ENCODE measurements at regions of chr10 and their contacts with region 1.

Region 1: DNA sequence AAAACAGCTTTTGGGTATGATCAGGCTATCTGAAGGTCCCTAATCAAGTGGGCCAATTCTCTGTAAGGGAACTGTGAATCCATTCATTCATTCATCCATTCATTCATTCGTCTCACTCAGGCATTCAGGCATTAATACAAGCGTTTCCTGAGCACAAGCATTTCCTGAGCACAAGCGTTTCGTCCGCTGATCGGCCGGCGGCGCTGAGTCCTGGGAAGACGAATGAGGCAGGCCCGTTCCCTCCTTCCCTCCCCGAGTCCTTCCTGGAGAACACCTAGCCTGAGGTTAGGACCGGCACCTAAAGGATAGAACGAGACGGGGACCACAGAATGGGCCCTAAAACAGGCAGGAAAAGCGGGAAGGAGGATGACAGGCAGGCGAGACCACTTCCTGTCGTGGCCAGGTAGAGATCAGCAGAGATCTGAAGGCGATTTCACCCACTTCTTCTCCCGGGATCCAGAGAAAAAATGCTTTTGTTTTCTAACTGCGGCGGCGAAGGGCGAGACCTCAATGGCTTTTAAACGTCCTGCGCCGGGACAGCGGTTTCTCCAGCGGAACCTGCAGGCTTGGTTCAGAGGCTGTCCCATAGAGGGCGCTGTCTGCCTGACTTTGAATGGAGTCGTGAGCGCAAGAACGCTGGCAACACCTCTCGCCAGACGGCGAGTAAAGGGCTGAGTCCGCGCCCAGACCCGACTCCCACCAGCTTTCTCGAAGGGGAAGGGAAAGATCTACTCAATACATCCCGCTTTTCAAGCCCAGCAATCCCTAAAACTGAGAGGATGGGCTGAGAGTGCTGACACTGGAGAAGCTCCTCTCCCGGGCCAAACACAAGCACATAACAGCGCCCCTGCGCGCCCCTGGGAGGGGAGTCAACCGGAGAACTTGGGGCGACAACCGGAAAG is 2.9 kb upstream of the HMX3 start:
- DNase-seq: peak; percentile 93
- ATAC-seq: peak; percentile 64
- H3K4me3 Mint-ChIP-seq: peak overlapping the region; percentile 47
- H3K27ac Mint-ChIP-seq: no peak overlapping the region
- H3K4me1 Mint-ChIP-seq: peaks cover 26% of the 10 kb centered on the region
- H3K27me3 Mint-ChIP-seq: peaks cover 74% of the 10 kb centered on the region
- CTCF ChIP-seq: peak; percentile 91

Region 2: GRCh38 chr10:123069246-123069986 is 63.4 kb before region 1 on chr10:
- CTCF ChIA-PET with region 1: no interaction called
- POLR2A ChIA-PET with region 1: no interaction called
- intact Hi-C with region 1: no loop called
- DNase-seq: no peak
- ATAC-seq: no peak
- H3K4me3 Mint-ChIP-seq: no peak overlapping the region
- H3K27ac Mint-ChIP-seq: no peak overlapping the region
- H3K4me1 Mint-ChIP-seq: no peaks in the 10 kb centered on the region
- H3K27me3 Mint-ChIP-seq: peaks cover 27% of the 10 kb centered on the region
- CTCF ChIP-seq: no peak

Region 3: DNA sequence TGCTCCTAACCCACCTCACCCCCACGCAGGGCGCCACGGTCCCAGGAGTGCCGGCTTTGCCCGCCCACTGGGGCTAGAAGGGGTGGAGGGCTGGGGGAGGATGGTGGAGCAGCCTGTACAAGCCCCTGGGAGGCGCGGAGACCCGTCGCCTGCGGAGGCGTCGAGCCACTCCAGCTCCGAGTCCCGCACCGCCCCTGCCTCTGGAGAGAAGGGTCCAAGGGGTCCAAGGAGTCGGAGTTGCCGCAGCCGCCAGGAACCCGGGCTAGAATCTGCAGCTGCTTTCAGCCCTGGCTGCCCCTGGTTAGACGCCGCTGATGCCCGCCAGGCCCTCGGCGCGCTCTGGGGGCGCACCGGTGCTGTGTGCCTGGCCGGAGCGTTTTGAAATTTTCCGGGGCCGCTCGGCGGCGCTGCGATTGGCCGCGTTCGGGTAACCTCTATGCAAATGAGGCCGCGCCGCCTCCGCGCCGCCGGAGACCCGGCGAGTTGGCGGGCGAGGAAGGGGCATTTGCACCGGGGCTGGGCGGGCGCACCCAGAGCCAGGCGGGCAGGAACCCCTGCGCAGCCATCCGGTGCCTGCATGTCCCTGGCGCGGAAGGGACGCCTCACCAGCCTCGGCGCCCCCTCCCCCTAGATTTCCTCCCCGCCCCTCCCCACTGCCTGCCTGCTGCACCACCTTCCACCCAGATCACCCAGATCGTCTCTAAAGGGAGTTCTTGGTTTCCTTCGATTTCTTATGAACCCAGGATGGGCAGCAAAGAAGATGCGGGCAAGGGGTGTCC is 15.0 kb after region 1 on chr10 and contains the start of gene HMX2:
- CTCF ChIA-PET with region 1: interaction called, 24 read pairs
- POLR2A ChIA-PET with region 1: interaction called, 9 read pairs
- intact Hi-C with region 1: loop called (anchors 2 kb)
- DNase-seq: peak; percentile 74
- ATAC-seq: peak; percentile 48
- H3K4me3 Mint-ChIP-seq: peak within 1 kb of the TSS; percentile 52
- H3K27ac Mint-ChIP-seq: no peak within 1 kb of the TSS
- H3K4me1 Mint-ChIP-seq: peaks cover 65% of the 10 kb centered on the region
- H3K27me3 Mint-ChIP-seq: peaks cover 66% of the 10 kb centered on the region
- CTCF ChIP-seq: no peak
- total RNA-seq, gene HMX2: 0.43 to 0.90 TPM

Region 4: DNA sequence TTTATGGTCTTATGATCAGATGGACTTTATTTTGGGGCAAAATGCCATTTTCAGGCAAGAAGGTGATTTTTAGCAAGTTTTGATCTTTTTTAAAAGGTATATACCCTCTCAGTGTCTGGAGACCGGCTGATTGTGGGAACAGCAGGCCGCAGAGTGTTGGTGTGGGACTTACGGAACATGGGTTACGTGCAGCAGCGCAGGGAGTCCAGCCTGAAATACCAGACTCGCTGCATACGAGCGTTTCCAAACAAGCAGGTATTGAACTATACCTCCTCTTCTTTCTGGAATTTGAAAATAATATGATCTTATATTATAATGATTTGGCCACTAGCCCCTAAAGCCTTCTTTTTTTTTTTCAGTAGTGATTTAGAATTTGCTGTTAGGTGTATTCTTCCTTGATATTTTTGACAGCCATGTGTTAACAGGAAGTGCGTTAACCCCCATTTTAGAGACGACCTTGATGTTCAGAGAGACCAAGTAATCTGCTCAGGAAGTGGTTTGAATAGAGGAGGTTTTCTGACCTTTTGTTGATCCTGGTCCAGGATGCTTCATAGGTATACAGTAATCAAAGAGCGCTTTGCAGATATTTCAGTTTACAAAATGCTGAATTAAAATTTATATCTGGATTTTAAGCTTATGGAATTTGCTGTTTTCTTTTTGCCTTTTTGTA is 27.6 kb after region 1 on chr10:
- CTCF ChIA-PET with region 1: interaction called, 10 read pairs
- POLR2A ChIA-PET with region 1: interaction called, 3 read pairs
- intact Hi-C with region 1: no loop called
- DNase-seq: peak; percentile 57
- ATAC-seq: peak; percentile 91
- H3K4me3 Mint-ChIP-seq: peak overlapping the region; percentile 52
- H3K27ac Mint-ChIP-seq: peak overlapping the region; percentile 89
- H3K4me1 Mint-ChIP-seq: peaks cover 72% of the 10 kb centered on the region
- H3K27me3 Mint-ChIP-seq: no peaks in the 10 kb centered on the region
- CTCF ChIP-seq: no peak

Region 5: DNA sequence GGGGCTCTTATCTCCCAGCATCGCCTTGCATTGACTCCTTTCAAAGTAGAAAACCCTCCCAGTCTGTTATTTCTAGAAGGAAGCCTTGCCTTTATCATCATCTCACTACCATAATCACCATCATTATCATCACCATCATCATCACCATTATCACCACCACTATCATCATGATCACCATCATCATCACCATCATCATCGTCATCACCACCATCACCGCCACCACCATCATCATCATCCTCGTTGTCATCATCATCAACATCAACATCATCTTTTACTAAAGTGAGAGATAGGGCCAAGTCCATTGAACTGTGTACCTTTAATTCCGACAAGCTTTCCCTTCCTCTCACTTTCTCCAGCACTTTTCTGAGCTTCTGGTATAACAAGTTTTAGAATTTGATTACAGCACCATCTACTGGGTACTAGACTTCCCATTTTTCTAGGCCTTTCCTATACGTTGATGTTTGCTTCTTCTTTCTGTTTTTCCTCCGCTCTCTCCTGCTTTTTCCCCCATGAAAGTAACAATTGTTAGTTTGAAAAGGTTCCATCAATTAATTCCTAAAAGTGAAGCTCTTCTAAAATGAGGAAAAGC is 247.8 kb after region 1 on chr10:
- CTCF ChIA-PET with region 1: interaction called, 12 read pairs
- POLR2A ChIA-PET with region 1: no interaction called
- intact Hi-C with region 1: loop called (anchors 5 kb)
- DNase-seq: no peak
- ATAC-seq: no peak
- H3K4me3 Mint-ChIP-seq: no peak overlapping the region
- H3K27ac Mint-ChIP-seq: no peak overlapping the region
- H3K4me1 Mint-ChIP-seq: no peaks in the 10 kb centered on the region
- H3K27me3 Mint-ChIP-seq: peaks cover 11% of the 10 kb centered on the region
- CTCF ChIP-seq: peak; percentile 27

Region 6: DNA sequence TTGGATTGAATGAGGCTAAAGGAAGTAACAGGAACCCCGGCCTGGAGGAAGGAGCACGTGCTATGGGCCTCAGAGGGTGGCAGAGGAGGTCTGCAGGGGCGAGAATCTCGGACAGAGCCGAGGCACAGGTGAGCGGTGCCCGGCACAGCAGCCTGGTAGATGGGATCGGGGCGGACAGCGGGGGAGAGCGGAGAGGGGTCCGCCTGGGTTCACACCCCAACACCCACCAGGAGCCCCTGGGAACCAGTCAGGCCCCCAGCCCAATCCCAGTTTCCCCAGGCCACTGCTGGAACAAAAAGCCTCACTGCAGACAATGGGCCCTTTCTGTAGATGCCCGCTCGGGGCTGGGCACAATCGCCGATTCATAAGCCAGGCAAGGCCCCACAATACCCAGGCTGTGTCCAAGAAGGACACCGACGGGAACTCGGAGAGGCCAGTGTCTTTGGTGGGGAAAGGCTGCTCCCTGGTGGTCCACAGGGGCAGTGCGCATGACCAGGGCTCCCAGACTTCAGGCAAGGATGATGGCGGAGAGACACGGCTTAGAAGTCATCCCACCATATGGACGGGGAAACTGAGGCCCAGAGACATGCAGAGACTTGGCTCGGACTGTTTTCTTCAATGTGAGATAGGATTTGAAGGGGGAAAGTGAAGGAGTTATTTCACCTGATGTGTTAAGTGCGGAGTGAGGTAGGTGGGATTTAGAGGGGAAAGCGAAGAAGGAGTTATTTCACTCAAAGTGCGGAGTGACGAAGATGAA is 426.4 kb after region 1 on chr10:
- CTCF ChIA-PET with region 1: interaction called, 15 read pairs
- POLR2A ChIA-PET with region 1: no interaction called
- intact Hi-C with region 1: loop called (anchors 2 kb)
- DNase-seq: peak; percentile 71
- ATAC-seq: peak; percentile 70
- H3K4me3 Mint-ChIP-seq: no peak overlapping the region
- H3K27ac Mint-ChIP-seq: no peak overlapping the region
- H3K4me1 Mint-ChIP-seq: no peaks in the 10 kb centered on the region
- H3K27me3 Mint-ChIP-seq: peaks cover 6% of the 10 kb centered on the region
- CTCF ChIP-seq: peak; percentile 94